ENCODE measurements at regions of chr5 and their contacts with region 1.

Region 1: DNA sequence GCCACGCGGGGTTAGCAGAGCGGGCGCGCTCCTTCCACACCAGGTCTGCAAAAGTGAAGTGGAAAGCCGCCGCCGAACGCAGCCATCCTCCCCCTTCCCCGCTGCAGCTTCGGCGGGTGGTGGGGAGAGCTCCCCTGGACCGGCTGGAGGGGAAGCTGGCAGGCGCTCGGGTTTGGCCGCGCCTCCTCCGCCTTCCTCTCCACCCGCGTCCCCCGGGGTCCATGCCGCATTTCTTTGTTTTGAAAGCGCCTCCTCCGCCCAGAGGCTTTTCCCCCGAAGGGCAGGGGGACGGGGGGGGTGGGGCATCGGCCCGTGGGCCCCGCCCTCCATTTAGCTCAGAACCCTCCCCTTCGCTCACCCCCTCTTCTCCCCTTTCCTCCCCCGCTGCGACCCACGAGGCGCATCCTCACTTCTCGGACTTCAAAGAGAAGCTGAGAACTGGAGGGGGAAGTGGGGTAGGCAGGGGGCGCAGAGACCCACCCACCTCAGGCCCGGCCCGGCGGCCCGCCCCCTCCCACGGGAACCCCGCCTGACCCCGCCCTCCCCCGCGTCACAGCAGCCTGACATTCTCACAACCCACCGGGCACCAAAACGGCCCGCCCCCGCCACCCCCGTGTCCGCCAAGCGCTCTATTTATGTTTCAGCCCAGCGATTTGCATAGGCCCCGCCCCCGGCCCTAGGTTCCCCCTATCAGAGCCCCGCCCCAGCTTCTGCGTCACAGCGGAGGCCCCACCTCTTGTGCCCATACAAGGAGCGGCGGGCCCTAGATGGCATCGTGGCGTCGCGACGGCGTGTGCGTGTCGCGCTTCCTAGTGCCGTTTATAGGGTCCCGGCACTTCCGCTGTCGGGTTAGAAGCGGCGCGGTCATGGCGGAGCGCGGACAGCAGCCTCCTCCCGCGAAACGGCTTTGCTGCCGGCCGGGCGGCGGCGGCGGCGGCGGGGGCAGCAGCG is at the start of gene ZSWIM6:
- DNase-seq: peak; percentile 99 to 100 (median 99)
- ATAC-seq: peak; percentile 82
- H3K4me3 ChIP-seq: peak within 1 kb of the TSS; percentile 93
- H3K4me3 Mint-ChIP-seq: peak within 1 kb of the TSS; percentile 100
- H3K27ac ChIP-seq: peak within 1 kb of the TSS; percentile 87 to 93
- H3K27ac Mint-ChIP-seq: peak within 1 kb of the TSS; percentile 100
- H3K4me1 ChIP-seq: peaks cover 27% of the 10 kb centered on the region
- H3K4me1 Mint-ChIP-seq: peaks cover 47% of the 10 kb centered on the region
- H3K27me3 ChIP-seq: peaks cover 7 to 16% of the 10 kb centered on the region in 2 experiments
- H3K27me3 Mint-ChIP-seq: peaks cover 38% of the 10 kb centered on the region
- CTCF ChIP-seq: no peak
- total RNA-seq, gene ZSWIM6: 4.1 TPM

Region 2: GRCh38 chr5:60944904-60945812 is 386.5 kb before region 1 on chr5 and contains the starts of genes ERCC8 and NDUFAF2:
- CTCF ChIA-PET with region 1: no interaction called
- POLR2A ChIA-PET with region 1: interaction called, 7 read pairs
- intact Hi-C with region 1: loop called in 1 of 2 experiments (anchors 5 kb)
- DNase-seq: peak; percentile 75 to 93 (median 82)
- ATAC-seq: peak; percentile 98
- H3K4me3 ChIP-seq: peak within 1 kb of the TSS; percentile 73
- H3K4me3 Mint-ChIP-seq: no peak within 1 kb of the TSS
- H3K27ac ChIP-seq: peak within 1 kb of the TSS; percentile 47 to 63
- H3K27ac Mint-ChIP-seq: no peak within 1 kb of the TSS
- H3K4me1 ChIP-seq: peaks cover 10% of the 10 kb centered on the region
- H3K4me1 Mint-ChIP-seq: peaks cover 25% of the 10 kb centered on the region
- H3K27me3 ChIP-seq: no peaks in the 10 kb centered on the region
- H3K27me3 Mint-ChIP-seq: no peaks in the 10 kb centered on the region
- CTCF ChIP-seq: no peak
- total RNA-seq, gene ERCC8: 2.6 to 3.7 TPM
- total RNA-seq, gene NDUFAF2: 8.1 to 8.8 TPM

Region 3: GRCh38 chr5:61010467-61011454 is 320.9 kb before region 1 on chr5:
- CTCF ChIA-PET with region 1: no interaction called
- POLR2A ChIA-PET with region 1: no interaction called
- intact Hi-C with region 1: no loop called
- DNase-seq: no peak
- ATAC-seq: no peak
- H3K4me3 ChIP-seq: no peak overlapping the region
- H3K4me3 Mint-ChIP-seq: no peak overlapping the region
- H3K27ac ChIP-seq: no peak overlapping the region
- H3K27ac Mint-ChIP-seq: no peak overlapping the region
- H3K4me1 ChIP-seq: no peaks in the 10 kb centered on the region
- H3K4me1 Mint-ChIP-seq: peaks cover 8% of the 10 kb centered on the region
- H3K27me3 ChIP-seq: no peaks in the 10 kb centered on the region
- H3K27me3 Mint-ChIP-seq: no peaks in the 10 kb centered on the region
- CTCF ChIP-seq: no peak

Region 4: GRCh38 chr5:61289241-61289640 is 42.4 kb before region 1 on chr5:
- CTCF ChIA-PET with region 1: no interaction called
- POLR2A ChIA-PET with region 1: interaction called, 23 read pairs
- intact Hi-C with region 1: loop called in 1 of 2 experiments (anchors 5 kb)
- DNase-seq: no peak
- ATAC-seq: no peak
- H3K4me3 ChIP-seq: no peak overlapping the region
- H3K4me3 Mint-ChIP-seq: no peak overlapping the region
- H3K27ac ChIP-seq: no peak overlapping the region
- H3K27ac Mint-ChIP-seq: no peak overlapping the region
- H3K4me1 ChIP-seq: no peaks in the 10 kb centered on the region
- H3K4me1 Mint-ChIP-seq: no peaks in the 10 kb centered on the region
- H3K27me3 ChIP-seq: peaks cover 0 to 2% of the 10 kb centered on the region in 2 experiments
- H3K27me3 Mint-ChIP-seq: no peaks in the 10 kb centered on the region
- CTCF ChIP-seq: no peak

Region 5: DNA sequence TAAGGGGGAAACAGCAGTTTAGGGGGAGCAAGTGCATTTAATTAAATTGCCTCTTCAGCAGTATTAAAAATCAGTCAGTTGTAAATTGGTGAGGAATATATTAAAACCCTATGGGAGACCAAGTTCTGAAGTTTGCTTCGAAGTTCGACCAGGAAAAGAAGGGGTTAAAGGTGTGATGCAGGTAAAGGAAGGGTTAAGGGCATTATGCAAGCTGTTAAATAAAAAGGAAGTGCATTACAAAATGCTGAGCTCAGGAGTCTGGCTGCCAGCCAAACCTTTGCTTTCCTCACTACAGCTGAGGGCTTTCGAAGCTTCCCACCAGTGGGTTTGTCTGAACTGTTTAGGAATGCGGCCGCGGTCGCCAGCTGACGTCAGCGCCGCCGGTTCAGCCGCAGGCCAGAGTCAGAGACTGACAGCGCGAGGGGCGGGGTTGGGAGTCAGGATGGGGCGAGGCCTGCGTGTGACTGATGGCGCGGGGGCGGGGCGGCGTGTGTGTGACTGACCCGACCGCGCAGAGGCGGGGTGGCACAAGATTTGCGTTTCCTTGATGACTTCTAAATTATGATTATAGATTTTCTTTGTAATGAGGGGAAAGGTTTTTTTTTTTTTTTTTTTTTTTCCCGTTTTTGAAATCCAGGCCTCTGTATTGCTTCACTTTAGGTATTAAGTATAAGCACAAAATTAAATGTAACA is 76.9 kb after region 1 on chr5:
- CTCF ChIA-PET with region 1: interaction called, 12 read pairs
- POLR2A ChIA-PET with region 1: interaction called, 60 read pairs
- intact Hi-C with region 1: loop called (anchors 1 to 2 kb)
- DNase-seq: peak; percentile 90 to 100 (median 98)
- ATAC-seq: peak; percentile 95
- H3K4me3 ChIP-seq: peak overlapping the region; percentile 42
- H3K4me3 Mint-ChIP-seq: peak overlapping the region; percentile 86
- H3K27ac ChIP-seq: peak overlapping the region in 1 of 2 donors; percentile 37
- H3K27ac Mint-ChIP-seq: peak overlapping the region; percentile 71
- H3K4me1 ChIP-seq: no peaks in the 10 kb centered on the region
- H3K4me1 Mint-ChIP-seq: peaks cover 25% of the 10 kb centered on the region
- H3K27me3 ChIP-seq: no peaks in the 10 kb centered on the region
- H3K27me3 Mint-ChIP-seq: no peaks in the 10 kb centered on the region
- CTCF ChIP-seq: no peak

Region 6: DNA sequence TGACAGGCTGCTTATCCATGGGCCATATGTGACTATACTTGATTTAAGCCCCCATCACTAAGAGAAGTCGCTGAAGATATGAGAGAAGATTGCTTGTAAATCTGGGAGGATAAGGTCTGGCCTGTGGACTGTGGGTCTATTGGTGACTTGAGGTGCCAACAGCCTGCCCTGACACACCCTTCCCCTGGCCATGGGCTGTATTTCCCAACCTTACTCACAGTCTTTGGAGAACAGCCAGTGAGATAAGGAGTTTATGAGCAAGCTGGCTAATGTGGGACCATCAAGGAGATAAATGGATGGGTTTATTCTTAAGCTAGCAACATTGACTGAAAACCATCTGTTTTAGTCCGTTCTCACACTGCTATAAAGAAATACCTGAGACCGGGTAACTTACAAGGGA is 231.7 kb after region 1 on chr5:
- CTCF ChIA-PET with region 1: no interaction called
- POLR2A ChIA-PET with region 1: no interaction called
- intact Hi-C with region 1: no loop called
- DNase-seq: no peak
- ATAC-seq: no peak
- H3K4me3 ChIP-seq: no peak overlapping the region
- H3K4me3 Mint-ChIP-seq: no peak overlapping the region
- H3K27ac ChIP-seq: no peak overlapping the region
- H3K27ac Mint-ChIP-seq: no peak overlapping the region
- H3K4me1 ChIP-seq: no peaks in the 10 kb centered on the region
- H3K4me1 Mint-ChIP-seq: no peaks in the 10 kb centered on the region
- H3K27me3 ChIP-seq: no peaks in the 10 kb centered on the region
- H3K27me3 Mint-ChIP-seq: no peaks in the 10 kb centered on the region
- CTCF ChIP-seq: no peak

Region 7: GRCh38 chr5:62412537-62413329 is 1081.1 kb after region 1 on chr5 and contains the start of gene IPO11:
- CTCF ChIA-PET with region 1: no interaction called
- POLR2A ChIA-PET with region 1: no interaction called
- intact Hi-C with region 1: loop called in 1 of 2 experiments (anchors 10 kb)
- DNase-seq: peak; percentile 97 to 100 (median 98)
- ATAC-seq: peak; percentile 94
- H3K4me3 ChIP-seq: peak within 1 kb of the TSS; percentile 86
- H3K4me3 Mint-ChIP-seq: peak within 1 kb of the TSS; percentile 88
- H3K27ac ChIP-seq: peak within 1 kb of the TSS; percentile 69 to 79
- H3K27ac Mint-ChIP-seq: peak within 1 kb of the TSS; percentile 78
- H3K4me1 ChIP-seq: peaks cover 14% of the 10 kb centered on the region
- H3K4me1 Mint-ChIP-seq: peaks cover 30% of the 10 kb centered on the region
- H3K27me3 ChIP-seq: no peaks in the 10 kb centered on the region
- H3K27me3 Mint-ChIP-seq: no peaks in the 10 kb centered on the region
- CTCF ChIP-seq: no peak
- total RNA-seq, gene IPO11: 15.1 to 16.1 TPM